ENCODE measurements at regions of chr5 and their contacts with region 1.

Region 1: DNA sequence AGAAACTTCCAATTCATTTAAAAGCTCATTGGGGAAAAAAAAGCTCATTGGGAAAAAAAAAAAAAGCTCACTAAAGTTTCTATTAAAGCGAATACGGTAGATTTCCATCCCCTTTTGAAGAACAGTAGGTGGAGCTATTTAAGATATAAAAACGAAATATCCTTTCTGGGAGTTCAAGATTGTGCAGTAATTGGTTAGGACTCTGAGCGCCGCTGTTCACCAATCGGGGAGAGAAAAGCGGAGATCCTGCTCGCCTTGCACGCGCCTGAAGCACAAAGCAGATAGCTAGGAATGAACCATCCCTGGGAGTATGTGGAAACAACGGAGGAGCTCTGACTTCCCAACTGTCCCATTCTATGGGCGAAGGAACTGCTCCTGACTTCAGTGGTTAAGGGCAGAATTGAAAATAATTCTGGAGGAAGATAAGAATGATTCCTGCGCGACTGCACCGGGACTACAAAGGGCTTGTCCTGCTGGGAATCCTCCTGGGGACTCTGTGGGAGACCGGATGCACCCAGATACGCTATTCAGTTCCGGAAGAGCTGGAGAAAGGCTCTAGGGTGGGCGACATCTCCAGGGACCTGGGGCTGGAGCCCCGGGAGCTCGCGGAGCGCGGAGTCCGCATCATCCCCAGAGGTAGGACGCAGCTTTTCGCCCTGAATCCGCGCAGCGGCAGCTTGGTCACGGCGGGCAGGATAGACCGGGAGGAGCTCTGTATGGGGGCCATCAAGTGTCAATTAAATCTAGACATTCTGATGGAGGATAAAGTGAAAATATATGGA is at the start of gene PCDHGA12:
- DNase-seq: peak; percentile 76
- H3K4me3 ChIP-seq: no peak within 1 kb of the TSS
- H3K27ac ChIP-seq: no peak within 1 kb of the TSS
- H3K4me1 ChIP-seq: no peaks in the 10 kb centered on the region
- CTCF ChIP-seq: peak; percentile 85
- total RNA-seq, gene PCDHGA12: 2.6 and 3.9 TPM in 2 replicates

Region 2: DNA sequence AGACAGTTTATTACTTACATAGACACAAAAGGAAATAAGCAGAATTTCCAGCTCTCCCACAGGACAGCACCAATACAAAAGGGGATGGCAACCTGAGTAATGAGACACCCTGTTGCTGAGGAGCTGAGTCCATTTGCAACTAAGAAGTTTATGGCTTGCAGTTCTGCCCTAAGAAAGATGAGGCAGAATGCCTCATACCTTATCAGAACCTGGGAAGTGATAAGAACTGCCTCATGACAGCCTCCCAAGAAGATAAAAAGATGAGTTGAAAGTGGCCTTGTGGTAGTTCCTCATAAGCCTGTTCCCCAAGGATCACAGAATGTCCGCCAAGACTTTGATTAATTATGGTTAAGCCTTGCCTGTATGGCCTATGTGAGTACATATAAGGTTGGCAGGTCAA is 688.6 kb before region 1 on chr5:
- CTCF ChIA-PET with region 1: no interaction called
- POLR2A ChIA-PET with region 1: interaction called, 10 read pairs
- intact Hi-C with region 1: no loop called
- DNase-seq: no peak
- H3K4me3 ChIP-seq: no peak overlapping the region
- H3K27ac ChIP-seq: no peak overlapping the region
- H3K4me1 ChIP-seq: no peaks in the 10 kb centered on the region
- CTCF ChIP-seq: no peak